Heart right ventricle (tissue), 16 donors: ENCODE measurements at regions of chr2 and their contacts with region 1.

Region 1: GRCh38 chr2:124437811-124438210 is 412.7 kb downstream of the CNTNAP5 start:
- DNase-seq: no peak
- ATAC-seq: no peak
- H3K4me3 ChIP-seq: no peak overlapping the region
- H3K27ac ChIP-seq: no peak overlapping the region
- H3K4me1 ChIP-seq: no peaks in the 10 kb centered on the region
- H3K27me3 ChIP-seq: no peaks in the 10 kb centered on the region
- CTCF ChIP-seq: no peak

Region 2: GRCh38 chr2:123768233-123768632 is 669.6 kb before region 1 on chr2:
- intact Hi-C with region 1: no loop called
- DNase-seq: no peak
- ATAC-seq: no peak
- H3K4me3 ChIP-seq: no peak overlapping the region
- H3K27ac ChIP-seq: no peak overlapping the region
- H3K4me1 ChIP-seq: no peaks in the 10 kb centered on the region
- H3K27me3 ChIP-seq: no peaks in the 10 kb centered on the region
- CTCF ChIP-seq: no peak

Region 3: GRCh38 chr2:124395961-124396360 is 41.9 kb before region 1 on chr2:
- intact Hi-C with region 1: loop called in 1 of 10 experiments (anchors 2 kb)
- DNase-seq: no peak
- ATAC-seq: no peak
- H3K4me3 ChIP-seq: no peak overlapping the region
- H3K27ac ChIP-seq: no peak overlapping the region
- H3K4me1 ChIP-seq: no peaks in the 10 kb centered on the region
- H3K27me3 ChIP-seq: peaks cover 0 to 6% (median 0%) of the 10 kb centered on the region in 7 donors
- CTCF ChIP-seq: no peak